ENCODE measurements at regions of chr11 and their contacts with region 1.

Region 1: GRCh38 chr11:94342250-94342649 is 37.9 kb downstream of the IZUMO1R start:
- DNase-seq: no peak
- ATAC-seq: no peak
- H3K4me3 ChIP-seq: no peak overlapping the region
- H3K27ac ChIP-seq: no peak overlapping the region
- H3K4me1 ChIP-seq: no peaks in the 10 kb centered on the region
- H3K27me3 ChIP-seq: no peaks in the 10 kb centered on the region
- CTCF ChIP-seq: no peak
- EP300 ChIP-seq: no peak
- POLR2A ChIP-seq: no peak
- RAD21 ChIP-seq: no peak

Region 2: GRCh38 chr11:94201004-94201465 is 141.2 kb before region 1 on chr11:
- CTCF ChIA-PET with region 1: no interaction called
- POLR2A ChIA-PET with region 1: no interaction called
- in situ Hi-C with region 1: no loop called
- intact Hi-C with region 1: loop called (anchors 10 kb)
- DNase-seq: no peak
- ATAC-seq: no peak
- H3K4me3 ChIP-seq: no peak overlapping the region
- H3K27ac ChIP-seq: no peak overlapping the region
- H3K4me1 ChIP-seq: peaks cover 0 to 2% of the 10 kb centered on the region in 2 experiments; a peak in 2 of 5 replicates
- H3K27me3 ChIP-seq: peaks cover 0 to 6% of the 10 kb centered on the region in 2 experiments; a peak in 1 of 5 replicates
- CTCF ChIP-seq: no peak
- EP300 ChIP-seq: no peak
- POLR2A ChIP-seq: no peak
- RAD21 ChIP-seq: no peak

Region 3: DNA sequence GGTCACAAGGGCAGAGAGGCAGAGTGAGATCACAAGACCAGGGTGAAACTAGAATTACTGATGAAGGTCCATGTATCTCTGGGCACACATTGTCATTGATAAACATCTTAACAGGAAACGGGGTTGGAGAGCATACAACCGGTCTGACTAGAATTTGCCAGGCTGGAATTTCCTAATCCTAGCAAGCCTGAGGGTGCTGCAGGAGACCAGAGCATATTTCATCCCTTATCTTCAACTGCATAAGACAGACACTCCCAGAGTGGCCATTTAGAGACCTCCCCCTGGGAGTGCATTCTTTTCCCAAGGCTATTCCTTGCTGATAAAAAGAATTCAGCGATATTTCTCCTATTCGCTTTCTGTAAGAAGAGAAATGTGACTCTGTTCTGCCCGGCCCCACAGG is 122.5 kb before region 1 on chr11:
- CTCF ChIA-PET with region 1: no interaction called
- POLR2A ChIA-PET with region 1: no interaction called
- in situ Hi-C with region 1: no loop called
- intact Hi-C with region 1: no loop called
- DNase-seq: no peak
- ATAC-seq: no peak
- H3K4me3 ChIP-seq: no peak overlapping the region
- H3K27ac ChIP-seq: no peak overlapping the region
- H3K4me1 ChIP-seq: no peaks in the 10 kb centered on the region
- H3K27me3 ChIP-seq: no peaks in the 10 kb centered on the region
- CTCF ChIP-seq: no peak
- EP300 ChIP-seq: no peak
- POLR2A ChIP-seq: no peak
- RAD21 ChIP-seq: no peak

Region 4: GRCh38 chr11:94271885-94272372 is 70.3 kb before region 1 on chr11:
- CTCF ChIA-PET with region 1: no interaction called
- POLR2A ChIA-PET with region 1: no interaction called
- in situ Hi-C with region 1: no loop called
- intact Hi-C with region 1: no loop called
- DNase-seq: no peak
- ATAC-seq: no peak
- H3K4me3 ChIP-seq: no peak overlapping the region
- H3K27ac ChIP-seq: no peak overlapping the region
- H3K4me1 ChIP-seq: no peaks in the 10 kb centered on the region
- H3K27me3 ChIP-seq: no peaks in the 10 kb centered on the region
- CTCF ChIP-seq: no peak
- EP300 ChIP-seq: no peak
- POLR2A ChIP-seq: no peak
- RAD21 ChIP-seq: no peak

Measured in K562 (cell line).